ENCODE measurements at regions of chr4 and their contacts with region 1.

Region 1: GRCh38 chr4:87465739-87466366 is 43.5 kb downstream of the NUDT9 start:
- H3K4me3 ChIP-seq: no peak overlapping the region
- H3K27ac ChIP-seq: no peak overlapping the region
- H3K4me1 ChIP-seq: 0 out of 2 replicates have a peak, but pooled peaks cover 2% of the 10 kb centered on the region
- CTCF ChIP-seq: 0 out of 2 replicates have a peak, but pooled peaks have one; percentile 10

Region 2: DNA sequence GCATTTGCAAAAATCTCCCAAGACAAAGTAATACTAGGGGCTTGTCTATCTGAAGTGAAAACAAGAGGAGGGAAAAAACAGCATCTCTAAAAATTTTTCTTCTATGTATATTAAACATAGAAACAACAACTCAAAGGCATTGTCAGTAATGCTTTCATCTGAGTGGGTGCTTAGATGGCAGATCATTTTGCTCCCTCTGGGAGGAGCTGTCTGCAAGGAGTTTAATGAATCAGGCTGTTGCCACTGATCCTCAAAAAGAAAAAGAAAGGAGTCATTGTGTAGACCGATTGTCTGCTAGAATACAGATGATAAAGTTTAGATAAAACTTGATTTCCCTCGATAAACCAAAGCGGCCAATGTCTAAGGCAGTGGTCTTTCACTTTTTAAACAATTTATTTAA is 195.7 kb before region 1 on chr4:
- CTCF ChIA-PET with region 1: interaction called, 12 read pairs
- POLR2A ChIA-PET with region 1: no interaction called
- H3K4me3 ChIP-seq: no peak overlapping the region
- H3K27ac ChIP-seq: no peak overlapping the region
- H3K4me1 ChIP-seq: no peaks in the 10 kb centered on the region
- CTCF ChIP-seq: peak; percentile 27; the same call in 1 of the 2 replicates

Region 3: DNA sequence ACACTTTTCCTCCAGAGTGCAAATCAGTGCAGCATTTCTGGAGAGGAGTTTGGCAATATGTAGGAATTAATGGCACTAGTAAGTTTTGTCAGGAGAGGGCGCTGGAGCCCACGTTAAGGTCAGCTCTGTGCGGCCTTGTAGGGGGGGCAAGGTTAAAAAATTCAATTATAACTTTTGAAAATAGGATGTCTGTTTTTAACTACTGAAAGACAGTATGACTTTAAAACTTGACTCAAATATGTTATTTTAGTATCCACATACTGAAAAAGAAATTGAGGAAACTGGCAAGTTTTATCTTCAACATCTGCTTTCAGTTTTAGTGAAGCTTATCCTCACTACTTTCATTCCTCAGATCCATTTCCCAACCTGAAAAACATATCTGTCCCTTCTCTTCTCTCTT is 112.3 kb before region 1 on chr4:
- CTCF ChIA-PET with region 1: interaction called, 18 read pairs
- POLR2A ChIA-PET with region 1: interaction called, 4 read pairs
- H3K4me3 ChIP-seq: no peak overlapping the region
- H3K27ac ChIP-seq: no peak overlapping the region
- H3K4me1 ChIP-seq: no peaks in the 10 kb centered on the region
- CTCF ChIP-seq: 0 out of 2 replicates have a peak, but pooled peaks have one; percentile 8

Region 4: GRCh38 chr4:87375719-87376291 is 90.0 kb before region 1 on chr4:
- CTCF ChIA-PET with region 1: interaction called, 35 read pairs
- POLR2A ChIA-PET with region 1: no interaction called
- H3K4me3 ChIP-seq: no peak overlapping the region
- H3K27ac ChIP-seq: no peak overlapping the region
- H3K4me1 ChIP-seq: no peaks in the 10 kb centered on the region
- CTCF ChIP-seq: no peak

Region 5: DNA sequence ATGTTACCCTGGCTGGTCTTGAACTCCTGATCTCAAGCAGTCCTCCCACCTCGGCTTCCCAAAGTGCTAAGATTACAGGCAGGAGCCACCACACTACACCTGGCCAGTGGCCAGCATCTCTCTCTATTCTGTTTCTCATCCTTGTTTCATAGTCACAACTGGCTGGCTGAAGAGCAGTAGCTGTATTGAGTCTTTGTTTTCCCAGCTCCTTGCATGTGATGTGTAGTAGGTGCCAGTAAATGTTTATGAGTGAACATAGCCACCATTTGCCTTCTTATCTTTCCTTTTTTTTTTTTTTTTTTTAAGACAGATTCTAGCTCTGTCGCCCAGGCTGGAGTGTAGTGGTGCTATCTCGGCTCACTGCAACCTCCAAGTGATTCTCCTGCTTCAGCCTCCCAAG is 19.9 kb before region 1 on chr4:
- CTCF ChIA-PET with region 1: no interaction called
- POLR2A ChIA-PET with region 1: no interaction called
- H3K4me3 ChIP-seq: no peak overlapping the region
- H3K27ac ChIP-seq: no peak overlapping the region
- H3K4me1 ChIP-seq: no peaks in the 10 kb centered on the region
- CTCF ChIP-seq: no peak

Region 6: GRCh38 chr4:87489678-87490077 is 23.8 kb after region 1 on chr4:
- CTCF ChIA-PET with region 1: no interaction called
- POLR2A ChIA-PET with region 1: no interaction called
- H3K4me3 ChIP-seq: no peak overlapping the region
- H3K27ac ChIP-seq: no peak overlapping the region
- H3K4me1 ChIP-seq: no peaks in the 10 kb centered on the region
- CTCF ChIP-seq: no peak

Region 7: GRCh38 chr4:87574996-87575395 is 109.1 kb after region 1 on chr4:
- CTCF ChIA-PET with region 1: no interaction called
- POLR2A ChIA-PET with region 1: no interaction called
- H3K4me3 ChIP-seq: no peak overlapping the region
- H3K27ac ChIP-seq: no peak overlapping the region
- H3K4me1 ChIP-seq: no peaks in the 10 kb centered on the region
- CTCF ChIP-seq: no peak